ENCODE measurements at regions of chr22 and their contacts with region 1.

Region 1: GRCh38 chr22:45553351-45554039 is 50.8 kb downstream of the FBLN1 start:
- DNase-seq: peak; percentile 54
- H3K4me3 ChIP-seq: no peak overlapping the region
- H3K27me3 ChIP-seq: no peaks in the 10 kb centered on the region
- CTCF ChIP-seq: peak; percentile 95

Region 2: GRCh38 chr22:45271667-45272201 is 281.8 kb before region 1 on chr22:
- CTCF ChIA-PET with region 1: interaction called, 12 read pairs
- POLR2A ChIA-PET with region 1: no interaction called
- DNase-seq: no peak
- H3K4me3 ChIP-seq: no peak overlapping the region
- H3K27me3 ChIP-seq: peaks cover 6% of the 10 kb centered on the region
- CTCF ChIP-seq: no peak

Region 3: DNA sequence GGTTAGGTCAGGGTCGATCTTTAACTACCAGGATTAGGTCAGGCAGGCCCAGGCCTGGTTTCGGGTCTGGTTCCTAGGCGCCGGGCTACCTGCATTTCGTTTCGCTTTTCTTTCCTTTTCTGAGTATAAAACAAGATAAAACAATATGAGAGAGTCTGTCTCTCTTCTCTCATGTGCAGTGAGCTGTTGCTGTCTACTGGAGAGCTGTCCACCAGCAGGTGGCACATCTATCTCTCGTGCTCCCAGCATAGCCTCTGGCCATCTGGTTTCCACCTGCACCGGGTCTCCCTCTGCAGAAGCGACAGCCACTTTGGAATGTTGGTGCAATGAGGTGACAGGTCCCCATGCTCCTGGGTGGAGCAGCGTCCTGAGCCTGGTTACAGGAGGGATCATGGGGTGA is 112.4 kb before region 1 on chr22:
- CTCF ChIA-PET with region 1: interaction called, 83 read pairs
- POLR2A ChIA-PET with region 1: no interaction called
- DNase-seq: no peak
- H3K4me3 ChIP-seq: no peak overlapping the region
- H3K27me3 ChIP-seq: no peaks in the 10 kb centered on the region
- CTCF ChIP-seq: peak; percentile 79

Region 4: GRCh38 chr22:45469281-45470073 is 84.0 kb before region 1 on chr22:
- CTCF ChIA-PET with region 1: interaction called, 6 read pairs
- POLR2A ChIA-PET with region 1: interaction called, 16 read pairs
- DNase-seq: peak; percentile 74
- H3K4me3 ChIP-seq: no peak overlapping the region
- H3K27me3 ChIP-seq: no peaks in the 10 kb centered on the region
- CTCF ChIP-seq: no peak

Region 5: DNA sequence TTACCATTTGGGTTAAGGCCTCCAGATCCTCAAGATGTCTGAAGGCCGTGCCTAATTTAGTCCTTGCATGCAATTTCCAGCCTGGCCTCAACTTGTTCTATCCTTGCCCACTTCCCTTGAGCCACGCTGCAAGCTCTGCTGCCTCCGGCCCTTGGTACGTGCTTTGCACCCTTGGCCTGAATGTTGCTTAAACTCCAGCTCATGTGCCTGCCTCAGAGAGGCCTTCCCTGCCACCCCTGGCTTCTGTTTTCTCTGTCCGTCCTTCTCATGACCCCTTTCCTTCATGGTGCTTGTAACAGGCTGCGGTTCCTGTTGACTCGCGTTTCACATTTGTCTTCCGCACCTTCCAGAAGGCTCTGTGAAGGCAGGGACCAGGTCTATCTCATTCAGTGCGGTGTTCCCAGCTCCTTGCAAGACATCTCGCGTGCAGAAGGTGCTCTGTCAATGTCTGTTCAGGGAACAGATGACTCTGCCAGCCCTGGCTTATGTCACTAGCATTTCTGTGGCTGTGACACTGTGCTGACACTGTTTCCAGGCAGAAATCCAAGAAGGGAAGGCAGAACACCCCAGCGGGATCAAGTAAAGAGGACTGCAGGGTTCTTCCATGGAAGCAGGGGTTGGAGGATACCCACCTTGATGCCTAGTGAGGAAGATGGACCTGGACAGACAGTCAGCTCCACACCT is 11.0 kb after region 1 on chr22:
- CTCF ChIA-PET with region 1: interaction called, 15 read pairs
- POLR2A ChIA-PET with region 1: no interaction called
- DNase-seq: no peak
- H3K4me3 ChIP-seq: no peak overlapping the region
- H3K27me3 ChIP-seq: no peaks in the 10 kb centered on the region
- CTCF ChIP-seq: no peak

Measured in BJ (cell line).